Prostate gland (tissue), 2 donors: ENCODE measurements at regions of chr1 and their contacts with region 1.

Region 1: DNA sequence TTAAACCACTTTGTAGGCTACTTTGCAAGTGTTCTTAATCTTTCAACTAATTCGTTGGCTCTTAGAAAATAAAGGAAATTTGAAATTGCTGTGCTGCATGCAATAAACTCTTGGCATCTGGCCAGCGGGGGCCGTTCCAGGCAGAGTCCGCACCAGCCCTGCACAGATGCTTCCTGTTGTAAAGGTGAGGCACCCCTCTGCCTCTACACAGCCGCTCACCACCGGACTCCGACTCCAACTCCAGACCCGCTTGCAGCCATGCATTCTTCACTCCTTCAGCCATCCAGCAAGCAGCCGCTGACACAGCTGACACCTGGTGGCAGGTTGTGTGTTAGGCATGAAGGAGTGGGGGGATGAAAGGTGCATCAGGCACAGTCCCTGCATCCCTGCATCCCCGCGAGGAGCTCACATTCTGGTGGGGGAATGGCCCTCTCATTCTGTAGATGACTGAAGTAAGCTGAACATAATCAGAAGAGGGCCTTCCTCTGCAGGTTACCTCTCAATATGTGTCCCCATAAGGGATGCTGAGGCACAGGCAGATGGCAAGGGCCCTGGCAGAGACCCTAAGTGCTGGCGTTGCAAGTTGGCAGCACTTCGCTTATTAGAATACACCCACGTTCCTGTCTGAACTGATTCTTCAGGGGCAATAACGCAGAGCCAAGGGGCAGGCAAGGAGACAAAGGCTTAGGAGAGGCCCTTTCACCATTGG is 56.8 kb downstream of the GLIS1 start:
- DNase-seq: peak; percentile 43
- H3K4me3 ChIP-seq: no peak overlapping the region
- H3K27ac ChIP-seq: no peak overlapping the region
- H3K4me1 ChIP-seq: no peaks in the 10 kb centered on the region
- H3K27me3 ChIP-seq: peaks cover 4% of the 10 kb centered on the region
- CTCF ChIP-seq: peak in 3 of 4 experiments; percentile 50 to 70 (median 65)
- POLR2A ChIP-seq: no peak

Region 2: GRCh38 chr1:53562291-53562980 is 119.7 kb before region 1 on chr1:
- intact Hi-C with region 1: loop called (anchors 10 kb)
- DNase-seq: no peak
- H3K4me3 ChIP-seq: no peak overlapping the region
- H3K27ac ChIP-seq: no peak overlapping the region
- H3K4me1 ChIP-seq: no peaks in the 10 kb centered on the region
- H3K27me3 ChIP-seq: no peaks in the 10 kb centered on the region
- CTCF ChIP-seq: no peak
- POLR2A ChIP-seq: no peak

Region 3: DNA sequence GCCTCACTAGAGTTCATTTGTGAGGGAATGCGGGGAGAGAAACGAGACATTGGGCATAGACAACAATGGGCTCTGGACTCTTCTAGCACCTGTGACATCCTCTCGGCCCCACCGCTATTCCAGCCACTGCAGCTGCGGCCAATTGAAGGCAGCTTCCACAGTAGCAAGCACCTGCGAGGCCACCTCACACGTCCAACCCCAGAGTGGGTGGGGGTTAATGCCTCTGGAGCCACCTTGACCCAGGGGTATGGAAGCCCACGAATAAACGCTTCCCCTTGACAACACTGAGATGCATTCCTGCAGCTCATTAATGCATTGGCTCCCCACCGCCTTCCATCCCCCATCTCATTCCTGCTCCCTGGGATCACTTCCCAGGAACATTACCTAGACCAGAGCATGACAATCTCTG is 47.6 kb before region 1 on chr1:
- intact Hi-C with region 1: loop called (anchors 5 kb)
- DNase-seq: no peak
- H3K4me3 ChIP-seq: no peak overlapping the region
- H3K27ac ChIP-seq: no peak overlapping the region
- H3K4me1 ChIP-seq: no peaks in the 10 kb centered on the region
- H3K27me3 ChIP-seq: no peaks in the 10 kb centered on the region
- CTCF ChIP-seq: no peak
- POLR2A ChIP-seq: no peak